ENCODE measurements at regions of chr2 and their contacts with region 1.

Region 1: GRCh38 chr2:169928463-169928864 is 101.2 kb downstream of the UBR3 start:
- DNase-seq: no peak
- H3K4me3 ChIP-seq: no peak overlapping the region
- H3K27ac ChIP-seq: no peak overlapping the region
- H3K4me1 ChIP-seq: no peaks in the 10 kb centered on the region
- H3K27me3 ChIP-seq: no peaks in the 10 kb centered on the region
- CTCF ChIP-seq: peak; percentile 38 to 65 (median 55)
- EP300 ChIP-seq: no peak
- POLR2A ChIP-seq: no peak

Region 2: DNA sequence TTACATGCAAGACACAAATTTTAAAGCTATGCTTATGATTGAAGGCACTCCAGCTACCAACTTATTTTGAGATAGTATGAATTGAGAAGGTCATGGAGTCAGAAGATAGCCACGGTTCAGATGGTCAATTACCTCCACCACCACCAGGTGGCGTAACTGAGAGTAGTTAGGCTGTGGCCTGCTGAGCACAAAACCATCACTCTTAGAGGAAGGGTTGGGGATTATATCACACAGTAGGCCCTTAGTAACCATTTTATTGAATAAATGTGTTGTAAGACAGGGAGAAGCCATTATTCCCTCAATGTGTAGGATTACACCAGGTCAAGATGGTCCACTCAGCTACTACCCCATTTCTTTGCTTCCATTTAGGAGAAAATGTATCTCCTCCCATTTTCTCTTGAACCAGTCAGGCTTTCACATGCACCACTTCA is 400.2 kb before region 1 on chr2:
- intact Hi-C with region 1: loop called (anchors 10 kb)
- DNase-seq: peak; percentile 76
- H3K4me3 ChIP-seq: no peak overlapping the region
- H3K27ac ChIP-seq: no peak overlapping the region
- H3K4me1 ChIP-seq: no peaks in the 10 kb centered on the region
- H3K27me3 ChIP-seq: no peaks in the 10 kb centered on the region
- CTCF ChIP-seq: peak in 3 of 4 experiments; percentile 65 to 84 (median 78)
- EP300 ChIP-seq: no peak
- POLR2A ChIP-seq: no peak

Region 3: DNA sequence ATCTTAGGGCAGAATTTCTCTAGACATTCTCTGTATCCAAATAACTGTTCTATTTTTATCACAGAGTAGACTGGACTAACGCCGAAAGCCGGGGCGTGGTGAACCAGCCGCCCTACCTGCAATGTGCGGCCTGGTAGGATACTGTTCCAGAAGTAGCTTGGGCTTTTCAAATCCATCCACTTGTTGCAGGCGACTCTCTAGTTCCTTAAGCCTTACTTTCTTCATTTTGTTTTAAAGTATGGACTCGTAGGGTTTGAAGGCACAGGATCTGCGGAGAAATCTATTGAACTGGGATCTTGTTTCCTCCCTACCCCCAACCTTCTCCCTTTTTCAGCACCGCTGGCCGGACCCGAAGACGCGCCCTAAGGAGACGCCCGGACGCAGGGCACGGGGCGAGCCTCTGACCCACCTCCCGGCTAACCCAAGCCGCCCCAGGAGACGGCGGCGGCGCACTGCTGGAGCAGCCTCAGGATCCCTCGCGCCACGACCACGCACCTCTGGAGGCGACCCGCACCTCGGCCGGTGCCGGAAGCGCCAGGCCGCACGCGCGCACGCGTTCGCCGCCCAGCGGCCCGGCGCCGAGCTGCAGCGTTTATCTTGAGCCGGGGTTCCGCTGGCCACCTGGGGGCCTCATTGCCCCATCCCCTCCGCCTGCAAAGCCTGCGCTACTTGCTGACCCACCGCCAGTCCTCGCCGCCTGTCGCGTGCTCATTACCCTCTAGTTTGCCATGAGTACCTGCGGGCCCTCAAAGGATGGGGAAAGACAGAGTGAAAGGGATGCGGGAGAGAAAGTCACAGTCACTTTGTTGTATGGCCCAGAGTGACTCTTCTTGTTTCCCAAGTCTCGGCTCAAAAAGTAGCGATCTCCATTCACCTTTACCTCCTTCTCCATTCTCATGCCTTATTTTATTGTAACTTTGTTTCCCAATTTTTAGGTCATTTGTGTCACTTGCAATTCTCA is 103.8 kb before region 1 on chr2 and contains the start of gene METTL5:
- intact Hi-C with region 1: loop called (anchors 2 kb)
- DNase-seq: peak; percentile 88
- H3K4me3 ChIP-seq: peak within 1 kb of the TSS; percentile 83 to 89 (median 86)
- H3K27ac ChIP-seq: peak within 1 kb of the TSS; percentile 85 to 89 (median 86)
- H3K4me1 ChIP-seq: peaks cover 0 to 48% (median 29%) of the 10 kb centered on the region in 4 donors
- H3K27me3 ChIP-seq: no peaks in the 10 kb centered on the region
- CTCF ChIP-seq: peak; percentile 56 to 96 (median 79)
- EP300 ChIP-seq: no peak
- POLR2A ChIP-seq: peak in 1 of 2 donors; percentile 48
- total RNA-seq, gene METTL5: 51.5 to 337 (median 86.9) TPM

Region 4: DNA sequence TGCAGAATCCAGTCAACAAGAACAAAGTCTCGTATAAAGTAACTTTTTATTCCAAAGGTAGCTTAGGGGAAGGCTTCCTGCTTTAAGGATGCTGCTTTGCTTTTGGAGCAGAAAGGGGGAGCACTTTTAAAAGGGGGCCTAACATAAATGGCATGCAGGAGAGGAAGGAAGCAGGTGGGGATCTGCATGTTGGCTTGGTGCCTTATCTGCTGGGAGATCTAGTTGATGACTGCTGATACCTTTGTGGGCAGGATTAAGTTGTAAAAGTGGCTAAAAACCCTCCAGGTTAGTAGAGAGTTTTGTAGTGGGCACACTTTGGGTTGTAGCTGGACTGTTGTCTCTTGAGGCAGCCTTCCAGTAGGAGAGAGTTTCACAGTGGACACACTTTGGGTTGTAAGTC is 78.7 kb before region 1 on chr2:
- intact Hi-C with region 1: no loop called
- DNase-seq: no peak
- H3K4me3 ChIP-seq: no peak overlapping the region
- H3K27ac ChIP-seq: no peak overlapping the region
- H3K4me1 ChIP-seq: peaks cover 0 to 35% (median 16%) of the 10 kb centered on the region in 4 donors
- H3K27me3 ChIP-seq: no peaks in the 10 kb centered on the region
- CTCF ChIP-seq: no peak
- EP300 ChIP-seq: no peak
- POLR2A ChIP-seq: no peak

Region 5: DNA sequence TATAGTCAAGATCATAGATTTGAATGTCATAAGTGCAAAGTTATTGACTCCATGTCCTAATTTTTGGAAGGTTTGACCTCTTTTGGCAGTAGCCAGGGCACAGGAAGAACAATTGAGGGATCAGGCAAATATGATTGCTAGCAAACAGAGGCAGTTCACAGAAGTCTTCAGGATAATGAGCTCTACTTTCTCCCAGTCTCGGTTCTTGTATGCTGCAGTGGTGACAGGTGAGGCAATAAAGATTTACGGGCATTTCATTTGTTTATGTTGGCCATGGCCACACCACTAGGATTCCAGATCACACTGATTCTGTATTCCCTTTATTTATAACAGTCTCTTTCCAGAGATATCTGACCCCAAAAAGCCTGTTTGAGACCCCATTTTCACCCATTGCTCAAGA is 36.3 kb after region 1 on chr2:
- intact Hi-C with region 1: no loop called
- DNase-seq: no peak
- H3K4me3 ChIP-seq: no peak overlapping the region
- H3K27ac ChIP-seq: no peak overlapping the region
- H3K4me1 ChIP-seq: peaks cover 0 to 13% (median 9%) of the 10 kb centered on the region in 4 donors
- H3K27me3 ChIP-seq: no peaks in the 10 kb centered on the region
- CTCF ChIP-seq: no peak
- EP300 ChIP-seq: no peak
- POLR2A ChIP-seq: no peak

Region 6: GRCh38 chr2:170486730-170487129 is 558.3 kb after region 1 on chr2:
- intact Hi-C with region 1: no loop called
- DNase-seq: no peak
- H3K4me3 ChIP-seq: no peak overlapping the region
- H3K27ac ChIP-seq: no peak overlapping the region
- H3K4me1 ChIP-seq: no peaks in the 10 kb centered on the region
- H3K27me3 ChIP-seq: no peaks in the 10 kb centered on the region
- CTCF ChIP-seq: no peak
- EP300 ChIP-seq: no peak
- POLR2A ChIP-seq: no peak